Gastrocnemius medialis (tissue), 4 donors: ENCODE measurements at regions of chr17 and their contacts with region 1.

Region 1: DNA sequence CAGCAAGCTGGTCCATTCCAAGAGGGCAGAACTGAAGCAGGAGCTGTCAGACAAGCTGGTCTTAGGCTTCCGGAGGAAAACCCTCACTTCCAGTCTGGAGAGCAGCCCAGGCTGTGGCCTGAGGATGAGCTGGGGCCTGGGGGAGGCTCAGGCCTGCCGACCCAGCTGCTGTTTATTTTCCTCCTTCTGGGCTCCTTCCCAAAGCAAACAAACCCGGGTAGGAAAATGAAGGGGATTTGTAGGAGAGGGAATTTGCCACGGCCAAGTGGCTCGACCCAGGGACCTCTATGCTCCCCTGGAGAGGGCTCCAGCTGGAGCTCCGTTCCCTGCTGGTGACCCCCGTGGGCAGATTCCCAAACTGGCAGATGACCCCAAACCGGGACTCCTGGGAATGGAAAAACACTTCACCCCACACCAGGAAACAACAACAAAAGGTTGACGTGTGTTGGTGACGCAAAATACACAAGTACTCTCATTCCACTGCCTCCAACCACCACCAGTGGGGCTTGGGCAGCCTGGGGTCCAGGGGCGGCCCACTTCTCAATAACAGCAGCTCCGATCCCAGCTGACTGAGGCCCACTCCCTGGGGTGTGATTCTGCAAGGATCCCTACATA is 8.8 kb downstream of the JUP start:
- DNase-seq: peak; percentile 48 to 53
- ATAC-seq: peak; percentile 15
- H3K4me3 ChIP-seq: peak overlapping the region in 1 of 4 donors; percentile 1
- H3K27ac ChIP-seq: peak overlapping the region; percentile 81 to 95 (median 92)
- H3K4me1 ChIP-seq: peaks cover 97 to 100% of the 10 kb centered on the region in 2 donors
- H3K27me3 ChIP-seq: no peaks in the 10 kb centered on the region
- CTCF ChIP-seq: peak in 3 of 5 experiments; percentile 9 to 42 (median 15)
- POLR2A ChIP-seq: peak in 1 of 2 donors; percentile 53

Region 2: GRCh38 chr17:41738077-41738735 is 39.5 kb before region 1 on chr17:
- in situ Hi-C with region 1: no loop called
- intact Hi-C with region 1: loop called (anchors 2 kb)
- DNase-seq: peak; percentile 55 to 71
- ATAC-seq: peak; percentile 73 to 93
- H3K4me3 ChIP-seq: no peak overlapping the region
- H3K27ac ChIP-seq: no peak overlapping the region
- H3K4me1 ChIP-seq: peaks cover 16 to 21% of the 10 kb centered on the region in 2 donors
- H3K27me3 ChIP-seq: peaks cover 43 to 44% (median 44%) of the 10 kb centered on the region in 3 donors
- CTCF ChIP-seq: peak; percentile 96 to 99 (median 98)
- POLR2A ChIP-seq: no peak

Region 3: DNA sequence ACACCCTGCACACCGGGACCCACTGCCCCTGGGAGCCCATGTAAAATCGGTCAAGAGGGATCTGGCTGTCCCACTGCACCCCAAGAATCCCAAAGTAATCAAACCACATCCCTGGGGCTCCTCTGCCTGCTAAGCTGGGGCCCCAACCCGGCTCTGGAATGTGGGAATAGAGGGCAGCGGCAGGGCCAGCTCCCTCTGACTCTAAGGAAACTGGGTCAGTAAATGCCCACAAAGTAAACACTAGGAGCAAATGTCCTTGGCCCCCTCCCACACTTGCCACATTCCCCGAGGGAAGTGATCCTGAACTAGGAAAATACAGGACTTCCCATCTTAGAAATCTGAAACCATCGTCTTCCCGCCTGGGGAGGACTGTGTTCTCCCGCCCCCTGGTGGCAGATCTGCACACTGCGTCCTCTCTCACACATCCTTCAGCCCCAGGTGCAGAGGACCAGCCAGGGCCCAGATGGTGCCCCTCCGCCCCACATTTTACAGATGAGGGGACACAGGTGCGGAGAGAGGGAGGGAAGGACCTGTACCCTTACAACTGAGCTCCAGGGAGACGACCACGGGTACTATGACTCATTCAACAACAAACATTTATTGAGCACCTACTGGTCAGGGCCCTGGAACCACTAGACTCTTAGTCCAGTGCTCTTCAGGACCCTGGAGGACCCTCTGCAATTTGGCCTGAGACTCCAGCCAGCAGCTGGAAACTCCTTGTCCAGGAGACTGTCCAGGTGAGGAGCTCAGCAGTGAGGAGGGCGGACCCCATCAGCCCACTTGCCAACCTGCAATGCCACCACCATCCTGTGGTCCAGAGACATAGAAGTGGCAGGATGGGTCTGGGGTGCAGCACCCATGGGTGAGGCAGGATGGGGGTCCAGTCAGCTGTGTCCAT is 23.9 kb after region 1 on chr17:
- in situ Hi-C with region 1: no loop called
- intact Hi-C with region 1: loop called (anchors 1 kb)
- DNase-seq: peak; percentile 60 to 72
- ATAC-seq: peak; percentile 83 to 95
- H3K4me3 ChIP-seq: peak overlapping the region in 1 of 4 donors; percentile 30
- H3K27ac ChIP-seq: no peak overlapping the region
- H3K4me1 ChIP-seq: peaks cover 5% of the 10 kb centered on the region in 2 donors
- H3K27me3 ChIP-seq: no peaks in the 10 kb centered on the region
- CTCF ChIP-seq: peak; percentile 93 to 98 (median 97)
- POLR2A ChIP-seq: no peak

Region 4: GRCh38 chr17:41811549-41812380 is 34.1 kb after region 1 on chr17 and contains the start of gene P3H4:
- in situ Hi-C with region 1: no loop called
- intact Hi-C with region 1: loop called (anchors 2 kb)
- DNase-seq: peak; percentile 42 to 66
- ATAC-seq: peak; percentile 79 to 89
- H3K4me3 ChIP-seq: peak within 1 kb of the TSS; percentile 56 to 88 (median 72)
- H3K27ac ChIP-seq: peak within 1 kb of the TSS; percentile 51 to 63 (median 58)
- H3K4me1 ChIP-seq: peaks cover 4 to 8% of the 10 kb centered on the region in 2 donors
- H3K27me3 ChIP-seq: no peaks in the 10 kb centered on the region
- CTCF ChIP-seq: peak; percentile 35 to 80 (median 68)
- POLR2A ChIP-seq: no peak
- total RNA-seq, gene P3H4: 1.8 to 4.0 (median 2.9) TPM

Region 5: GRCh38 chr17:42050393-42051012 is 272.8 kb after region 1 on chr17 and contains the start of gene C17orf113:
- in situ Hi-C with region 1: no loop called
- intact Hi-C with region 1: no loop called
- DNase-seq: peak; percentile 10 to 41
- ATAC-seq: peak; percentile 74
- H3K4me3 ChIP-seq: peak within 1 kb of the TSS; percentile 59 to 86 (median 70)
- H3K27ac ChIP-seq: peak within 1 kb of the TSS; percentile 12 to 47 (median 35)
- H3K4me1 ChIP-seq: peaks cover 0 to 3% of the 10 kb centered on the region in 2 donors
- H3K27me3 ChIP-seq: peaks cover 0 to 4% (median 0%) of the 10 kb centered on the region in 3 donors
- CTCF ChIP-seq: peak in 1 of 5 experiments; percentile 49
- POLR2A ChIP-seq: no peak
- total RNA-seq, gene C17orf113: 0.13 to 0.86 (median 0.38) TPM